ENCODE measurements at regions of chr3 and their contacts with region 1.

Region 1: GRCh38 chr3:49387721-49388120 is 24.1 kb downstream of the RHOA start:
- DNase-seq: no peak
- H3K4me3 ChIP-seq: no peak overlapping the region
- H3K4me3 Mint-ChIP-seq: no peak overlapping the region
- H3K27ac Mint-ChIP-seq: peak overlapping the region; percentile 25
- H3K4me1 ChIP-seq: no peaks in the 10 kb centered on the region
- H3K4me1 Mint-ChIP-seq: no peaks in the 10 kb centered on the region
- H3K27me3 ChIP-seq: no peaks in the 10 kb centered on the region
- H3K27me3 Mint-ChIP-seq: no peaks in the 10 kb centered on the region
- CTCF ChIP-seq: no peak

Region 2: GRCh38 chr3:48984663-48985062 is 403.1 kb before region 1 on chr3:
- CTCF ChIA-PET with region 1: no interaction called
- POLR2A ChIA-PET with region 1: no interaction called
- intact Hi-C with region 1: no loop called
- DNase-seq: no peak
- H3K4me3 ChIP-seq: no peak overlapping the region
- H3K4me3 Mint-ChIP-seq: no peak overlapping the region
- H3K27ac Mint-ChIP-seq: no peak overlapping the region
- H3K4me1 ChIP-seq: peaks cover 5% of the 10 kb centered on the region
- H3K4me1 Mint-ChIP-seq: peaks cover 13% of the 10 kb centered on the region
- H3K27me3 ChIP-seq: no peaks in the 10 kb centered on the region
- H3K27me3 Mint-ChIP-seq: no peaks in the 10 kb centered on the region
- CTCF ChIP-seq: no peak

Region 3: GRCh38 chr3:49358217-49358883 is 29.4 kb before region 1 on chr3 and contains the start of gene GPX1:
- CTCF ChIA-PET with region 1: no interaction called
- POLR2A ChIA-PET with region 1: interaction called, 11 read pairs
- intact Hi-C with region 1: no loop called
- DNase-seq: peak; percentile 97 to 98
- H3K4me3 ChIP-seq: peak within 1 kb of the TSS; percentile 81
- H3K4me3 Mint-ChIP-seq: peak within 1 kb of the TSS; percentile 96
- H3K27ac Mint-ChIP-seq: peak within 1 kb of the TSS; percentile 97
- H3K4me1 ChIP-seq: peaks cover 13% of the 10 kb centered on the region; the same call in 1 of the 2 replicates
- H3K4me1 Mint-ChIP-seq: peaks cover 6% of the 10 kb centered on the region
- H3K27me3 ChIP-seq: no peaks in the 10 kb centered on the region
- H3K27me3 Mint-ChIP-seq: no peaks in the 10 kb centered on the region
- CTCF ChIP-seq: no peak
- total RNA-seq, gene GPX1: 197 and 201 TPM in 2 replicates